ENCODE measurements at regions of chr10 and their contacts with region 1.

Region 1: GRCh38 chr10:94334857-94335256 is 27.9 kb downstream of the NOC3L start:
- DNase-seq: no peak
- ATAC-seq: no peak
- H3K4me3 ChIP-seq: no peak overlapping the region
- H3K27ac ChIP-seq: no peak overlapping the region
- H3K4me1 ChIP-seq: no peaks in the 10 kb centered on the region
- H3K27me3 ChIP-seq: no peaks in the 10 kb centered on the region
- CTCF ChIP-seq: no peak
- POLR2A ChIP-seq: no peak
- RAD21 ChIP-seq: no peak

Region 2: DNA sequence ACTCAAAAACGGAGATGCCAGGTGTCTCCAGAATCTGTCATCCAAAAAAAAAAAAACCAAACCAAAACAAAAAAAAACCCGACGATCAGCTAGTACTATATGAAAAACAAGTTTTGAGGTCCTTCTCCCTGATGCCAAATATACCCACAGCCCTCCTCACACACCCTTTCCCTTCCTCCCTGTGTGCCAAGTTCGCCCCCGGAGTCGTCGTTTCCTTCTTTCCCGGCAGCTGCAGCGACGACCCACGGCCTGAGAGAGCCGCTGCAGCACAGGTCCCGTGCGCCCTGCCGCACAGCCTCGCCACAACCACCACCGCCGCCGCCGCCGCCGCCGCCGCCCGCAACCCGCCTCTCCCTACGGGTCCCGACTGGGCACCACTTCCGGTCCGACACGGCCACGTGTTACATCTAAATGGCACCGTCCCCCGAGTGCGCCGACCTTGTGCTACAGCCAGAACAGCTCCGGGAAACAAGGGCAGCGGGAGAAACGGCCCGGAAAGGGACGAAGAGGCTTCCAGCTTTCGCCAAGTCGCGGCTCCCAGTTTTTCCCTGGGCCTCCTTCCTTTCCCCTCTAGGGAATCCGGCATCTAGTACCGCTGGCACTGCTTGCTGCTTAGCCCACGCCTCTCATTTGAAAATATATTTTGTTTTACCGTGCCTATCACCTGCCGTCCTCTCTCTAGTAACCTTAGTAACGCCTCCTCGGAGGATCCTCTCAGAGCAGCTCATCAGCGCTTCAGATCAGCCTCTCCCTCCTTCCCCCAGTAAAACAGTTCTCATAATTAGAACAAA is 632.5 kb before region 1 on chr10 and contains the start of gene FRA10AC1:
- CTCF ChIA-PET with region 1: no interaction called
- POLR2A ChIA-PET with region 1: no interaction called
- dilution Hi-C with region 1: no loop called
- in situ Hi-C with region 1: no loop called
- intact Hi-C with region 1: loop called (anchors 10 kb)
- DNase-seq: peak; percentile 92
- ATAC-seq: peak; percentile 97
- H3K4me3 ChIP-seq: peak within 1 kb of the TSS; percentile 91
- H3K27ac ChIP-seq: peak within 1 kb of the TSS; percentile 91
- H3K4me1 ChIP-seq: no peaks in the 10 kb centered on the region
- H3K27me3 ChIP-seq: peaks cover 2% of the 10 kb centered on the region; the same call in 1 of the 2 replicates
- CTCF ChIP-seq: peak; percentile 45
- POLR2A ChIP-seq: no peak
- RAD21 ChIP-seq: peak; percentile 46
- total RNA-seq, gene FRA10AC1: 1.6 and 10.6 TPM in 2 replicates

Region 3: DNA sequence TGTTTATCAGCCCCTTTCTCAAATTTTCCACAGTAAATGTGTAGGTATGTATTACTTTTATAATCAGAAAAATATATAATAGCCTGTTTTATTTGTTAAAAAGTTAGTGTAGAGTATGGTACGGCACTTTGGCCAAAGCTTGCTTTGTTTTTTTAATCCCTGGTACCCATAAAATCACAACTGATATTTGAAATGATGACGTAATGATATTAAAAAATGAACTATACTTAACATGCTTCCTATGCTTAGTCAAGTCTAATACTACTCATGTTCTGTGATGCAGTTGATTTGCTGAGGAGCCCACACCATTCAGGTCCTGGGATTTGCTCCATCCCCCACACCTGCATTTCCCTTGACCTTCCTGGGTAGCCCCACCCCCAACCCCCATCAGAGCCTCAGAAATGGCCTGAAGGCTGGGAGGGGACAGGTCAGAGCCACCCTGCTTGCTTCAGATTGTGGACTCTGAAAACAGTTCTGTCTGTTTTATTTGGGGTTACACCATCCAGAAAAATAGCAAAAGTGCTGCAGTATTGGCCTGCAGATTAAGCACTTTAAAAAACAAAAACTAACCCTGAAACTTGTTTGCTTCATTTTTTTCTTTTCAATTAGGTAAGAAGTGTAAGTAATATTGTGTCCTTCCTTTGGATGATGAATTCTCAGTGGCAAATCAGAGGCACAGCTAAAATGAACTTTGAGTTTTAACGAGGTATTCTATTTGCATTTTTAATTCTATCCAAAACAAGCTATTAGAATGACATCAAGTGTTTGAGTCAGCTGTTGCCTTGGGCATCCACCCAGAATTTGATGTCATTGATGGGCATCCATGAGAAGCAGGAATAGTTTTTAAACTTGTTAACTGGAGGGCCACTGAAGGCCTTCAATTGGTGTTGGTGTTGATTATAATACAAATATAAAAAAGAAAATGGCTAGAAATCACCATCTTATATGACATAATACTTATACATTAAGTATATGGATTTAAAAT is 317.8 kb before region 1 on chr10:
- CTCF ChIA-PET with region 1: no interaction called
- POLR2A ChIA-PET with region 1: no interaction called
- dilution Hi-C with region 1: no loop called
- in situ Hi-C with region 1: no loop called
- intact Hi-C with region 1: no loop called
- DNase-seq: peak; percentile 62
- ATAC-seq: no peak
- H3K4me3 ChIP-seq: no peak overlapping the region
- H3K27ac ChIP-seq: no peak overlapping the region
- H3K4me1 ChIP-seq: no peaks in the 10 kb centered on the region
- H3K27me3 ChIP-seq: no peaks in the 10 kb centered on the region
- CTCF ChIP-seq: no peak
- POLR2A ChIP-seq: no peak
- RAD21 ChIP-seq: no peak

Region 4: GRCh38 chr10:94465684-94466083 is 130.8 kb after region 1 on chr10:
- CTCF ChIA-PET with region 1: no interaction called
- POLR2A ChIA-PET with region 1: no interaction called
- dilution Hi-C with region 1: no loop called
- in situ Hi-C with region 1: no loop called
- intact Hi-C with region 1: no loop called
- DNase-seq: no peak
- ATAC-seq: no peak
- H3K4me3 ChIP-seq: no peak overlapping the region
- H3K27ac ChIP-seq: no peak overlapping the region
- H3K4me1 ChIP-seq: no peaks in the 10 kb centered on the region
- H3K27me3 ChIP-seq: no peaks in the 10 kb centered on the region
- CTCF ChIP-seq: no peak
- POLR2A ChIP-seq: no peak
- RAD21 ChIP-seq: no peak

Region 5: GRCh38 chr10:95635319-95635733 is 1300.5 kb after region 1 on chr10:
- CTCF ChIA-PET with region 1: no interaction called
- POLR2A ChIA-PET with region 1: no interaction called
- dilution Hi-C with region 1: no loop called
- in situ Hi-C with region 1: no loop called
- intact Hi-C with region 1: loop called (anchors 10 kb)
- DNase-seq: no peak
- ATAC-seq: no peak
- H3K4me3 ChIP-seq: no peak overlapping the region
- H3K27ac ChIP-seq: no peak overlapping the region
- H3K4me1 ChIP-seq: no peaks in the 10 kb centered on the region
- H3K27me3 ChIP-seq: no peaks in the 10 kb centered on the region
- CTCF ChIP-seq: no peak
- POLR2A ChIP-seq: no peak
- RAD21 ChIP-seq: no peak